ENCODE measurements at regions of chr1 and their contacts with region 1.

Region 1: DNA sequence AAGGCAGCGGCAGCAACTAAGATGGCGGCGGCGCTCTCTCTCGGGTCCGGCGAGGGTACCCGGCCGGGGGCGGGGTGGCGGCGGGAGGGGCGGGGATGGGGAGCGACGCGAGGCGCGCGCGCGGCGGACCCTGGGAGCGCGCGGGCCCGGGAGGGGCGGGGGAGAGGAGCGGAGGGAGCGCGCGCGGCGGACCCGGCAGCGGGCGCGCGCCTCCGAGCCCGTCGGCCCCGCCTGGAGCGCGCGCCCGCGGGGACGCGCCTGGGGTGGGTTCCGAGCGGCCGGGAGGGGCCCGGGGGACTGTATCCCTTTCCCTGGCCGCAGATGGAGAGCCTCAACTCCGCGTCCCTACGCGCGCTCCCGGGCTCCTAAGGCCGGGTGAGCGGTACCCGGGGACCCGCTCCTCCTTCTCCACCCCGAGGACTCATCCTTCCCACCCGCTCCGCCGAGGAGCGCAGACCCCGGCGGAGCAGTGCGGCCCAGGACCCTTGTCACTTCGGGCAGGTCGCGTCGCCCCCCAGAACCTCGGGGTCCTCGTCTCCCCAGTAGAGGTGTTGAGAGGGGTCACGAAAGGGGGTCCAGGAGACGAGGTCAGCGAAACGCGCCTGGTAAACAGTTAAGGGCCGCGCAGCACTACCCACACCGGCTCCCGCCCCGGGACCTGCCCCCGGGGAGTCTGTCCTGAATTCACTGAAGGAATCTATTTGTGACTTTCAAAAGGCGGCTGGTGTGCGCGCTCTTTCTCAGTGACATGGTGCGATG is at the start of gene CLSTN1:
- DNase-seq: peak; percentile 76
- H3K4me3 ChIP-seq: peak within 1 kb of the TSS; percentile 52 to 93 (median 91)
- H3K27ac ChIP-seq: peak within 1 kb of the TSS; percentile 72
- H3K4me1 ChIP-seq: peaks cover 27% of the 10 kb centered on the region
- H3K27me3 ChIP-seq: no peaks in the 10 kb centered on the region
- CTCF ChIP-seq: no peak
- total RNA-seq, gene CLSTN1: 229 to 335 TPM

Region 2: DNA sequence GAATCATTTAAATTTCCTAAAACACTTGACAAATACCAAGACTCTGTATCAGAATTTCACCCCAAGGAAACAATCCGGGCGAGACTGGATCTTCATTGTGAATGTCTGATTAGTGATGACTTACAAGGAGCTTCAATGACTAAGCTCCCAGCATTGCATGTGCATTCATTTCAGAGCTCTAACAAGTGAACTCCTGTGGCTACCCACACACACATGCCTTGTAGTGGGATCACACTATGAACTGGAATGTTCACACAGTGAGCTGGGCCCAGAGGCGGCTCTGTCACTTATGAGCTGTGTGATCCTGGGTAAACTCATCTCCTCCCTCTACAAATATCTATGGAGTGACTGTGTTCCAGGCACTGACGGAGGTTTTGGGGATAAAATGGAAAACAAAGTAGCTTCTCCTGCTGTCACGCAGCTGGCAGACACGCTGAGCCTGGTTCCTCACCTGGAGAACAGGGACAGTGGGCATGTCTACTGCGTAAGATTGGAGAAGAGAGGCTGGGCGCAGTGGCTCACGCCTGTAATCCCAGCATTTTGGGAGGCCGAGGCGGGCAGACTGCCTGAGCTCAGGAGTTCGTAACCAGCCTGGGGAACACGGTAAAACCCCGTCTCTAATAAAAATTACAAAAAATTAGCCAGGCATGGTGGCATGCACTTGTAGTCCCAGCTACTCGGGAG is 57.2 kb before region 1 on chr1:
- CTCF ChIA-PET with region 1: no interaction called
- dilution Hi-C with region 1: no loop called
- in situ Hi-C with region 1: no loop called
- intact Hi-C with region 1: loop called (anchors 1 kb)
- DNase-seq: peak; percentile 100
- H3K4me3 ChIP-seq: no peak overlapping the region
- H3K27ac ChIP-seq: peak overlapping the region; percentile 89
- H3K4me1 ChIP-seq: peaks cover 18% of the 10 kb centered on the region
- H3K27me3 ChIP-seq: no peaks in the 10 kb centered on the region
- CTCF ChIP-seq: no peak

Region 3: DNA sequence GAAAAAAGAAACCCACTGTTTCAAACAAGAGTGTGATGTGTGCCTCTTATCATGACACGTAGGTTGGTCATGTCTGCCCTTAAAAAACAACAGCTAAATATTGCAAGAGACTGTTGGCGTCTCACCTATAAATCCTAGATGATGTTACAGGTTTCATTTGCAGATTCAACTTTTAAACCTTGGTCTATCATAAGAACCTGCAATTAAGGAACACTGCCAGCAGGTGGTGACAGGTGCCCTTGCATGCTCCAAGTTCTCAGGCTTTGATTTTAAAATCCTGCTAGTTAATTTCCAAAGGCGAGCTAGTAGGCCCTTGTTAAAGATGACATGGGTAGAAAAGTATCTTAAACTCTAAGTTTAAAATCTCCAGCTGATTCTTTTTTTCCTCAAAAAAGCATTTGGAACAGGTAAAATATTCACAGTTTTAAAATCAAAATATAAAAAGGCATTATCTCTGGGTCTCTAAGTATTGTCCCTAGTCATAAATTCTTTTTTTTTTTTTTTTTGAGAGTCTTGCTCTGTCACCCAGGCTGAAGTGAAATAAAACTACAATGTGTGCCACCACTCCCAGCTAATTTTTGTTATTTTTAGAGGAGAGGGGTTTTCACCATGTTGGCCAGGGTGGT is 39.5 kb before region 1 on chr1:
- CTCF ChIA-PET with region 1: no interaction called
- dilution Hi-C with region 1: no loop called
- in situ Hi-C with region 1: no loop called
- intact Hi-C with region 1: loop called (anchors 1 kb)
- DNase-seq: peak; percentile 52
- H3K4me3 ChIP-seq: no peak overlapping the region
- H3K27ac ChIP-seq: no peak overlapping the region
- H3K4me1 ChIP-seq: peaks cover 12% of the 10 kb centered on the region
- H3K27me3 ChIP-seq: no peaks in the 10 kb centered on the region
- CTCF ChIP-seq: peak; percentile 79 to 84

Region 4: DNA sequence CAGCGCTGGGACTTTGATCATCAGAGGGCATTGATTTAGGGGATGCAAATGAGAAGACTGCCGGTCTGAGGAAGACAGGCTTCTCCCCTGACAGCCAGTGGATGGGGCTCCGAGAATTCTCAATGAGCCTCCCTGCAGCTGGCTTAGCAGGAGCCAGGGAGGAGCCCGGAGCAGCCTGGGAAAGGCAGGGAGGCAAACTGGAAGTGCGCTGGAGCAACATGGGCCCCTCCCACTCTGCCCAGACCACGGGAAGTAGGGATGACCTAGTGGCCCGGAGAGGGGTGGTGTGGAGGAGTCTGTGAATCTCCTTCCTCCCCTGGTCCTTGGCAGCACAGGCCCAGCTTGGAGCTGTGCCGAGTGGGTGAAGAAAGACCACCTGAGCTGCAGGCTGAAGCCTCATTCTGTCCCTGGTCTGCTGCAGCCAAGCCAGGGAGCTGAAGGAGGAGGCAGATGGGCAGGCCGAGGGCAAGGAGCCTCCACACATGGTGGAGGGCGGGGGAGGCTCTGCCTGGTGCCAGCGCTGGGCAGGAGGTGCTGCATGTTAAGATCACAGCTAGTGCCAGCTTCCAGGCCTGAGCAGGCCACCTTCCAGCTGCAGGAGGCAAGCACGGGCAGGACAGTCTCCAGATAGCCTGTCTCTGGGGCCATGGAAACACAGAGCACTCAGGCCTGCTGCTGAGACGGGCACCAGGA is 11.8 kb after region 1 on chr1:
- CTCF ChIA-PET with region 1: interaction called, 4 read pairs
- dilution Hi-C with region 1: no loop called
- in situ Hi-C with region 1: no loop called
- intact Hi-C with region 1: loop called (anchors 1 kb)
- DNase-seq: peak; percentile 55
- H3K4me3 ChIP-seq: peak overlapping the region; percentile 3 to 43 (median 25)
- H3K27ac ChIP-seq: peak overlapping the region; percentile 51
- H3K4me1 ChIP-seq: peaks cover 50% of the 10 kb centered on the region
- H3K27me3 ChIP-seq: no peaks in the 10 kb centered on the region
- CTCF ChIP-seq: peak in 1 of 2 donors; percentile 4

Region 5: GRCh38 chr1:9852410-9853248 is 28.5 kb after region 1 on chr1:
- CTCF ChIA-PET with region 1: no interaction called
- dilution Hi-C with region 1: no loop called
- in situ Hi-C with region 1: no loop called
- intact Hi-C with region 1: loop called (anchors 1 kb)
- DNase-seq: peak; percentile 80
- H3K4me3 ChIP-seq: no peak overlapping the region
- H3K27ac ChIP-seq: peak overlapping the region; percentile 30
- H3K4me1 ChIP-seq: peaks cover 18% of the 10 kb centered on the region
- H3K27me3 ChIP-seq: no peaks in the 10 kb centered on the region
- CTCF ChIP-seq: no peak

Measured in mammary epithelial cell (primary cell).